Natural killer cell (primary cell): ENCODE measurements at regions of chr17 and their contacts with region 1.

Region 1: DNA sequence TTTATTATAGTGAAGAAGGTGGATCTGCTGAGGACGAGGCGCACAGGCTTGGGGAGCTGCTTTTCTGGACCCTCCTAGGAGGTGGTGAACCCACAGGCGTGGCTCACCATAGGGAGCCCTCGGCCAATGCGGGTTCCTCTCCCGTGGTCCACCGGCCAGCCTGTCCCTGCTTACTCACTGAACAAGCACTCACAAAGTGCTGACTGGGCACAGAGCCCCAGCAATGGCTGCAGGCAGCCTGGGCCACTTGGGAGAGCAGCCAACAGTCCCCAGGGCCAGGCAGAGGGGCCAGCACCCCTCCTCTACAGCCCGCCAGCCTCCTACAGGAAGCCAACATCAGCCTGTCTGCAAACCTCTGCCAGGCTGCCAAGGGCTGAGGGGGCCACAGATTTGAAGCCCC is 19.1 kb upstream of the NCBP3 start:
- DNase-seq: no peak
- ATAC-seq: no peak
- H3K4me3 ChIP-seq: no peak overlapping the region
- H3K4me3 Mint-ChIP-seq: no peak overlapping the region
- H3K27ac ChIP-seq: no peak overlapping the region
- H3K27ac Mint-ChIP-seq: no peak overlapping the region
- H3K4me1 ChIP-seq: no peaks in the 10 kb centered on the region
- H3K4me1 Mint-ChIP-seq: peaks cover 0 to 5% of the 10 kb centered on the region in 2 donors
- H3K27me3 ChIP-seq: no peaks in the 10 kb centered on the region
- H3K27me3 Mint-ChIP-seq: no peaks in the 10 kb centered on the region
- CTCF ChIP-seq: no peak

Region 2: GRCh38 chr17:4004517-4005295 is 139.5 kb after region 1 on chr17:
- intact Hi-C with region 1: loop called (anchors 1 kb)
- DNase-seq: peak; percentile 63 to 77
- ATAC-seq: peak; percentile 70 to 84 (median 81)
- H3K4me3 ChIP-seq: no peak overlapping the region
- H3K4me3 Mint-ChIP-seq: no peak overlapping the region
- H3K27ac ChIP-seq: no peak overlapping the region
- H3K27ac Mint-ChIP-seq: no peak overlapping the region
- H3K4me1 ChIP-seq: peaks cover 10% of the 10 kb centered on the region
- H3K4me1 Mint-ChIP-seq: peaks cover 0 to 12% of the 10 kb centered on the region in 2 donors
- H3K27me3 ChIP-seq: no peaks in the 10 kb centered on the region
- H3K27me3 Mint-ChIP-seq: peaks cover 0 to 3% of the 10 kb centered on the region in 2 donors
- CTCF ChIP-seq: peak; percentile 97

Region 3: DNA sequence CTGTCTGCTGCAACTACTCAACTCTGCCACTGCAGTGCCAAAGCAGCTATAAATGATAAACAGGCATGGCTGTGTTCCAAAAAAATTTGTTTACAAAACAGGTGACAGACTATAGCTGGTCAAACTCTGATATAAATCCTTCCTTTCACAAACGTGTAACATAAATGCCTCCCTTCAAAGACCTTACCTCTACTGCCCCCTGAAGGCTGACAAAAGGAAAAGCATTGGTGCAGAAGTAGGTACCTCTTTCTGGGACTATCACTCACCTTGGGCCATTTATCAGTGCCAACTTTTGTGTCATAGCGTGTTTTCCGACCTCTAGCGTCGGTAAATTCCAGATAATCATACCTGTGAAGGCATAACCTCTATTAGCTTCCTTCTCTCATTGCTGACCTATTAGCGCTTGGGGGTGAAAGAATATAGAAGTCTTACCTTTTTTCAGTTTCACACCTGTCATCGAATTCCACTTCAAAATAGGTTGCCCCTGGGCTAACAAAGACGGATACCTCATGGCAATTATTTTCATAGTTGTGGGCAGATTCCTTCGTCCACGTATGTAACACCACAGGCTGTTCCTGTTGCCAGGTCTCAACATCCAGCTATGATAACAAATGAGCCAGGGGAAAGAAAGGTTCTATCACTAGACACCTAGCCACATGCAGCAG is 209.8 kb after region 1 on chr17:
- intact Hi-C with region 1: loop called (anchors 1 kb)
- DNase-seq: peak in 1 of 2 donors; percentile 80
- ATAC-seq: peak; percentile 65 to 72 (median 69)
- H3K4me3 ChIP-seq: no peak overlapping the region
- H3K4me3 Mint-ChIP-seq: no peak overlapping the region
- H3K27ac ChIP-seq: no peak overlapping the region
- H3K27ac Mint-ChIP-seq: peak overlapping the region in 1 of 2 donors; percentile 50
- H3K4me1 ChIP-seq: no peaks in the 10 kb centered on the region
- H3K4me1 Mint-ChIP-seq: no peaks in the 10 kb centered on the region
- H3K27me3 ChIP-seq: no peaks in the 10 kb centered on the region
- H3K27me3 Mint-ChIP-seq: no peaks in the 10 kb centered on the region
- CTCF ChIP-seq: peak; percentile 62